WTC11 (cell line): ENCODE measurements at regions of chr19 and their contacts with region 1.

Region 1: DNA sequence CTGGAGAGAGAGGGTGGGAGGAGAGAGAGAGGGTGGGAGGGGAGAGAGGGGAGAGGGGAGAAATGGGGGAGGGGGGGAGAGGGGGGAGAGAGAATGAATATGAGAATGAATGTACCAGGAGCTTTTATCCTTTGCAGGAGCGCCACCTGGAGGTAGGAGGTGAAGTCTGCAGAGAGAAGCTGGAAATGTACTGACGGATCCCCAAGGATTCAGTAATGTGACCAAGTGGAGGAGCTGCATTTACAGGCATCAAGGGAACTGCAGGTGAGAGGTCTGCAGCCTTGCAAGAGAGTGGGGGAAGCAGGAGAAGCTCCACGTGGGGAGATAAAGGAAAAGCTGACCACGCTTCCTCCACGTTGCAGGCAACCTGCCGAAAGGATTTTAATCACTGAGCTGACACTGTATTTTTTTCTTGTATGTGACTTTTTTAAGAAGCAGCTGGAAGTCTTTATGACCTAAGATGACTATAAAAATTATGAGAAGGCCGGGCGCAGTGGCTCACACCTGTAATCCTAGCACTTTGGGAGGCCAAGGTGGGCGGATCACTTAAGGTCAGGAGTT is 33.7 kb downstream of the VSTM1 start:
- DNase-seq: peak; percentile 86
- ATAC-seq: peak; percentile 90
- H3K4me3 Mint-ChIP-seq: no peak overlapping the region
- H3K27ac Mint-ChIP-seq: peak overlapping the region; percentile 75
- H3K4me1 Mint-ChIP-seq: peaks cover 36% of the 10 kb centered on the region
- H3K27me3 Mint-ChIP-seq: no peaks in the 10 kb centered on the region
- CTCF ChIP-seq: peak; percentile 79

Region 2: GRCh38 chr19:53808710-53809125 is 221.3 kb before region 1 on chr19:
- CTCF ChIA-PET with region 1: interaction called, 54 read pairs
- POLR2A ChIA-PET with region 1: interaction called, 8 read pairs
- DNase-seq: peak; percentile 40
- ATAC-seq: peak; percentile 74
- H3K4me3 Mint-ChIP-seq: no peak overlapping the region
- H3K27ac Mint-ChIP-seq: no peak overlapping the region
- H3K4me1 Mint-ChIP-seq: peaks cover 10% of the 10 kb centered on the region
- H3K27me3 Mint-ChIP-seq: peaks cover 9% of the 10 kb centered on the region
- CTCF ChIP-seq: no peak

Region 3: DNA sequence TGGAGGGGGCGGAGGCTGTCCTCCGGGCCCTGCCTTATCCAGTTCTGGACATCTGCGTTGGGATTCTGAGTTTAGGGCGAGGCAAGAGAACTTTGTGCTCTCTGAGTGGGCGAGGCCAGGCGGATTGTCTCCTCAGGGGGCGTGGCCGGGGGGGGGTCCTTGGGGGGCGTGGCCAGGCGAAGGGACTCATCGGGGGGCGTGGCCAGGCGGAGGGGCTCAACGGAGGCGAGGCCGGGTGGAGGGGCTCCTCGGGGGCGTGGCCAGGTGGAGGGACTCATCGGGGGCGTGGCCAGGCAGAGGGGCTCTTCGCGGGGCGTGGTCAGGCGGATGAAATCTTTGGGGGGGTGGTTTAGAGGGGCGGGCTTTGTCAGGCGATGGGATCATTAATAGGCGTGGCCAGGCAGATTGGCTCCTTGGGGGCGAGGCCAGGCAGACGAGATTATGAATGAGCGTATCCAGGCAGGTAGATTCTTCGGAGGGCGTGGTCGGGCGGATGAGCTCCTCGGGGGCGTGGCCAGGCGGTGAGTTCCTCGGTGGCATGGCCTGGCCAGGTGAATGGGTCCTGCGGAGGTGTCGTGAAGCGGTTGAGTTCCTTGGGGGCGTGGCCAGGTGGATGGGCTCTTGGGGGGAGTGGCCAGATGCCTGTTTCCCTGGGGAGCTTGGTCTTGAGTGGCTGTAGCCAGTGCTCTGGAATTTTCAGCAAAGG is 131.2 kb before region 1 on chr19:
- CTCF ChIA-PET with region 1: interaction called, 16 read pairs
- POLR2A ChIA-PET with region 1: no interaction called
- DNase-seq: peak; percentile 100
- ATAC-seq: peak; percentile 92
- H3K4me3 Mint-ChIP-seq: peak overlapping the region; percentile 81
- H3K27ac Mint-ChIP-seq: peak overlapping the region; percentile 100
- H3K4me1 Mint-ChIP-seq: peaks cover 33% of the 10 kb centered on the region
- H3K27me3 Mint-ChIP-seq: 0 out of 2 replicates have a peak, but pooled peaks cover 9% of the 10 kb centered on the region
- CTCF ChIP-seq: no peak

Region 4: GRCh38 chr19:53947624-53948023 is 82.4 kb before region 1 on chr19:
- CTCF ChIA-PET with region 1: interaction called, 37 read pairs
- POLR2A ChIA-PET with region 1: interaction called, 6 read pairs
- DNase-seq: no peak
- ATAC-seq: peak; percentile 83
- H3K4me3 Mint-ChIP-seq: no peak overlapping the region
- H3K27ac Mint-ChIP-seq: no peak overlapping the region; the same call in 1 of the 2 replicates
- H3K4me1 Mint-ChIP-seq: peaks cover 42% of the 10 kb centered on the region
- H3K27me3 Mint-ChIP-seq: no peaks in the 10 kb centered on the region
- CTCF ChIP-seq: no peak

Region 5: GRCh38 chr19:53991224-53992113 is 38.5 kb before region 1 on chr19 and contains the start of gene CACNG6:
- CTCF ChIA-PET with region 1: interaction called, 10 read pairs
- POLR2A ChIA-PET with region 1: no interaction called
- DNase-seq: peak; percentile 69
- ATAC-seq: peak; percentile 60
- H3K4me3 Mint-ChIP-seq: peak within 1 kb of the TSS; percentile 68
- H3K27ac Mint-ChIP-seq: no peak within 1 kb of the TSS
- H3K4me1 Mint-ChIP-seq: peaks cover 16% of the 10 kb centered on the region
- H3K27me3 Mint-ChIP-seq: peaks cover 48% of the 10 kb centered on the region
- CTCF ChIP-seq: no peak
- total RNA-seq, gene CACNG6: 2.5 to 3.3 TPM (median 2.5 TPM) in 3 replicates

Region 6: DNA sequence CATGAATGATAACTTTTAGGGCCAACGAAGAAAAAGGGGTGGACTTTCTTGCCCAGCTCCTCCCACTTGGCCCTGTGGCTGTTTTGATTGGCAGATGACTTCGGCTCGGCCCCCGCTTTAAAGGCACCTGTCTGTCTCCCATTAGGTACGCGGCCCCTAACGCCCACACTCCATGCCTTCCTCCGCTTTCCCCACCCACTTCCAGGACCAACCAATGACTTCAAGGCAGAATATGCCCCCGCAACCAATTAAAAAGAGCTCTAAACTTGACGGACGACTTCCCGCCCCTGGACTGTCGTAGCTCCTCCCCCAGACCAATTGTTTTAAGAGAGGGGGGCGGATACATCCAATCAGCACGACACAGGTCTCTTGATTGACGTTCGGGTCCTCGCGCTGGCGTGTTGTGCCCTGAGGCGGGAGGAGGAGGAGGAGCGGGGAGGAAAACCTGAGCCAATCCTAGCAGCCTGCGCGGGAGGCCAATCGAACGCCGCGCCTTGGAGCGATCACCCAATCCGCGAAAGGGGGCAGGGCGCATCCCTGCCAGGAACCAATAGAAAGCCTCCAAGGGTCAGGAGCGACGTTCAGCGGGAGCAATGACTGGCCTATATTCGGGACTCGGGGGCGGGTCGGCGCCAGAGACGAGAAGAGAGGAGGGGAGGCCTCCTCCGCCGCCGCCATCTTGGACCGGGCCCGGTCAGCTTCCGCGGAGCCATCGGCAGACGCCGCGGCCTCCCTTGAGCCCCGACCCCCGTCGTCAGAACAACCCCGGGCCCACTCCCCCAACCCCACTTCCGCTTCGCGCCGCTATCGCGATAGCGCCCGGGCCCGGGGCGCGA is 107.3 kb after region 1 on chr19 and contains the start of gene CNOT3:
- CTCF ChIA-PET with region 1: interaction called, 19 read pairs
- POLR2A ChIA-PET with region 1: no interaction called
- DNase-seq: peak; percentile 100
- ATAC-seq: peak; percentile 89
- H3K4me3 Mint-ChIP-seq: peak within 1 kb of the TSS; percentile 92
- H3K27ac Mint-ChIP-seq: peak within 1 kb of the TSS; percentile 98
- H3K4me1 Mint-ChIP-seq: peaks cover 35% of the 10 kb centered on the region
- H3K27me3 Mint-ChIP-seq: no peaks in the 10 kb centered on the region
- CTCF ChIP-seq: no peak
- total RNA-seq, gene CNOT3: 90.7 to 96.8 TPM (median 93.3 TPM) in 3 replicates

Region 7: GRCh38 chr19:54257116-54257480 is 227.1 kb after region 1 on chr19 and contains the start of gene LILRB5:
- CTCF ChIA-PET with region 1: no interaction called
- POLR2A ChIA-PET with region 1: no interaction called
- DNase-seq: no peak
- ATAC-seq: no peak
- H3K4me3 Mint-ChIP-seq: no peak within 1 kb of the TSS
- H3K27ac Mint-ChIP-seq: no peak within 1 kb of the TSS
- H3K4me1 Mint-ChIP-seq: peaks cover 3% of the 10 kb centered on the region; the same call in 1 of the 2 replicates
- H3K27me3 Mint-ChIP-seq: peaks cover 15% of the 10 kb centered on the region
- CTCF ChIP-seq: no peak
- total RNA-seq, gene LILRB5: 0.07 to 0.11 TPM (median 0.09 TPM) in 3 replicates